Ascending aorta (tissue), 2 donors: ENCODE measurements at regions of chr5 and their contacts with region 1.

Region 1: DNA sequence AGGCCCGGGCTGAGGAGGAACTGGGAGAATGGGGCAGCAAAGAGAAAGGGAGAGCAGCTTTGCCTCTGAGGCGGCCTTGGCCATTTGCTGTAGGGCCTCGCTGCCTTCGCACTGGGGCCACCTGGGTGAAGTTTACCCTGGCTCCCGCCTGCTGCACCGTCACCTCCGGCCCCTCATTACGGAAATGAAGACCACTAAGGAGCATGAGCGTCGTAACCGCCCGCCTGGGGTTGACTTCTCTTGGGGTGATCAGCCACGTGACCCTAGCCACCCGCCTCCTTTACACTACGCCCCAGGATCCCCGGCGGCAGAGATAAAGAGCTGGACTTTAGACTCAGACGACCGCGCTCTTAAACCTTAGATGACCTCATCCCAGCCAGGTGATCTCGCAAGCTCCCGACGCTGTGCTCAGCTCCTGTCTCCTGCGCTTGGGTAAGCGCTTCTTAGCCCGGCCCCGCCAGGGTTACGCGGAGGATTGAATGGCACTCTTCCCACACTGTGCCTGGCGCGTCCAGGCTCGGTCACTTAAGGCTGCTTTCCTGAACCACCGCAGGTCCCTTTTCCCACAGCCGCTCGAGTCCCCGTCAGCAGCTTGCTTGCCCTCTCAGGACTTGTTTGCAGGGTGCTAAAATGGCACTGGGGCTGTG is 107.9 kb upstream of the LARP1 start:
- DNase-seq: no peak
- H3K4me3 ChIP-seq: peak overlapping the region; percentile 18 to 61
- H3K27ac ChIP-seq: no peak overlapping the region
- H3K4me1 ChIP-seq: peaks cover 0 to 9% of the 10 kb centered on the region in 2 donors
- H3K27me3 ChIP-seq: no peaks in the 10 kb centered on the region
- CTCF ChIP-seq: no peak

Region 2: DNA sequence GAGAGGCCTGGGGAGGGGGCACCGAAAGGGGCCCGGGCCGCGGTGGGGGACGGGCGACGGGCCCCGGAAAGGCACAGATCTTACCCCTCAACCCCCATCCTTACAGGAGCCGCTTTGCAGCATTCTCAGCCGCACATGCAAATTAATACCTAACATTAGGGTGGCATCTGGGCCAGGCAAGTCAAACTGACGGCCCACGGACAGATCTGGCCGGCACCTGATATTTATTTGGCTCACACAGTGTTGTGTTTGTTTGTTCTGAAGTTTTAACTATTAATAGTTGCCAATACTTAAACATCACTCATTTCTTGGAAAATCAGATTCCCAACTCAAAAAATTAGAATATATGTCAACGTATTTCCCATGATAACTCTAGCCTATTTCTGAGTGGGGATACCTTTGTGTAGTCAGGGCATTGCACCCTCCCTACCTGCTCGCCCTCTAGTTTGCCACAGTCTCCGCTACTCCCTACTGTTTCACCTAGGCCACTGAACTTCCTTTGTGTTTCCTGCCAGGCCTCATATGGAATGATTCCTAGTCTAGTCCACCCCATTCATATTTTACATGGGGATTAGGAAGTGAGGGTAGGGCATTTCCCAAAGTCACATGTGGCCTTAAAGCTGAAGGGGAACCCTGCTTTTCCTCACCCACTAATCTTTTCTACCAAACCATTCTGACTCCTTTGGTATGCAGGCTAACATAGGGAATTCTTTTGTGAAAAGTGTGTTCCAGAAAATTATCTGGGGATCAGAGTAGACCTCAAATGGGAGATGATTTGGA is 36.1 kb after region 1 on chr5:
- intact Hi-C with region 1: loop called (anchors 2 kb)
- DNase-seq: no peak
- H3K4me3 ChIP-seq: peak overlapping the region; percentile 55 to 80
- H3K27ac ChIP-seq: peak overlapping the region; percentile 65 to 77
- H3K4me1 ChIP-seq: peaks cover 5 to 10% of the 10 kb centered on the region in 2 donors
- H3K27me3 ChIP-seq: no peaks in the 10 kb centered on the region
- CTCF ChIP-seq: no peak

Region 3: DNA sequence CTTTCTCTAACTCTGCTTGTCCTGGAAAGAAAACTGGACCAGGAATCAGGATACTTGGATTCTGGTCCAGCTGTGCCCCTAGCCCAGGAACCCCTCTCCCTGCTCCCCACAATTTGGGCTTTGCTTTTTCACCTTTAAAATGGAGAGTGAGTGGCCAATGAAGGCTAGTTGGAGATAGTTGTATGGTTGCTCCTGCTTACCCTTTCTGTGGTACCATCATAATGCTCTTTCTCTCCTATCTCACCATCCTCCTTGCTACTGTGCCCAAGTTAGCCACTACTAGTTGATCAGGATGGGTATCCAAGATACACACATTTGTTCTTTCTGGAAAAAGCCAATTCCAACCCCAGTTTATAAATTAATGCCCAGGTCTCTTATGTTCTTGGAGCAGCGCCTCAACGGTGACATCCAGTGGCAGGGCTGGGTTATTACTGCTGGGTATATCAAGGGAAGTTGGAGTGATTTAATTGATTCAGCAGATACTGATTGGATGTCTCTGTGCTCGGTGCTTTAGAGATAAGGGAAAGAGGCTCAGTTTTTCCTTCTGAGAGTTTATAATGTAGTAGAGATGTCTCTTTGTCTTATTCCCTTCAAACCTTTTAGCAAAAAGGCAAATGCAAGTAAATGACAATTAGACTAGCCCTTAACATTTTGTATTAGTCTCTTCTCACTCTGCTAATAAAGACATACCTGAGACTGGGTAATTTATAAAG is 164.6 kb after region 1 on chr5:
- intact Hi-C with region 1: loop called (anchors 1 kb)
- DNase-seq: peak in 1 of 2 donors; percentile 76
- H3K4me3 ChIP-seq: no peak overlapping the region
- H3K27ac ChIP-seq: no peak overlapping the region
- H3K4me1 ChIP-seq: no peaks in the 10 kb centered on the region
- H3K27me3 ChIP-seq: no peaks in the 10 kb centered on the region
- CTCF ChIP-seq: peak; percentile 70 to 89 (median 81)

Region 4: GRCh38 chr5:154940772-154941620 is 293.8 kb after region 1 on chr5 and contains the start of gene MRPL22:
- intact Hi-C with region 1: loop called (anchors 10 kb)
- DNase-seq: peak; percentile 59 to 94
- H3K4me3 ChIP-seq: peak within 1 kb of the TSS; percentile 61 to 89
- H3K27ac ChIP-seq: peak within 1 kb of the TSS; percentile 66 to 69
- H3K4me1 ChIP-seq: peaks cover 4 to 25% of the 10 kb centered on the region in 2 donors
- H3K27me3 ChIP-seq: no peaks in the 10 kb centered on the region
- CTCF ChIP-seq: peak in 1 of 3 experiments; percentile 4
- total RNA-seq, gene MRPL22: 7.8 TPM